B cell (primary cell): ENCODE measurements at regions of chr10 and their contacts with region 1.

Region 1: DNA sequence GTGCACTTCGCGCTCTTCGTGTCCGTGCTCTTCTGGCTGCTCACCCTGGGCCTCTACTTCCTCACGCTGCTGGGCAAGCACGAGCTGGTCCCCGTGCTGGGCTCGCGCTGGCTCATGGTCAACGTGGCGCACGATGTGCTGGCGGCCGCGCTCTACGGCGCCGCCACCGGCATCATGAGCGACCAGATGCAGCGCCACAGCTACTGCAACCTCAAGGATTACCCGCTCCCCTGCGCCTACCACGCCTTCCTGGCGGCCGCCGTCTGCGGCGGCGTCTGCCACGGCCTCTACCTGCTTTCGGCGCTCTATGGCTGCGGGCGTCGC is 480 bp downstream of the MARVELD1 start:
- DNase-seq: peak; percentile 82
- ATAC-seq: peak; percentile 84
- H3K4me3 ChIP-seq: peak overlapping the region; percentile 4 to 67 (median 58)
- H3K4me3 Mint-ChIP-seq: peak overlapping the region; percentile 100
- H3K27ac ChIP-seq: no peak overlapping the region
- H3K27ac Mint-ChIP-seq: peak overlapping the region; percentile 91
- H3K4me1 ChIP-seq: peaks cover 12 to 18% of the 10 kb centered on the region in 2 donors
- H3K4me1 Mint-ChIP-seq: peaks cover 20% of the 10 kb centered on the region
- H3K27me3 ChIP-seq: peaks cover 0 to 37% (median 16%) of the 10 kb centered on the region in 4 experiments
- H3K27me3 Mint-ChIP-seq: peaks cover 27% of the 10 kb centered on the region
- CTCF ChIP-seq: no peak

Region 2: DNA sequence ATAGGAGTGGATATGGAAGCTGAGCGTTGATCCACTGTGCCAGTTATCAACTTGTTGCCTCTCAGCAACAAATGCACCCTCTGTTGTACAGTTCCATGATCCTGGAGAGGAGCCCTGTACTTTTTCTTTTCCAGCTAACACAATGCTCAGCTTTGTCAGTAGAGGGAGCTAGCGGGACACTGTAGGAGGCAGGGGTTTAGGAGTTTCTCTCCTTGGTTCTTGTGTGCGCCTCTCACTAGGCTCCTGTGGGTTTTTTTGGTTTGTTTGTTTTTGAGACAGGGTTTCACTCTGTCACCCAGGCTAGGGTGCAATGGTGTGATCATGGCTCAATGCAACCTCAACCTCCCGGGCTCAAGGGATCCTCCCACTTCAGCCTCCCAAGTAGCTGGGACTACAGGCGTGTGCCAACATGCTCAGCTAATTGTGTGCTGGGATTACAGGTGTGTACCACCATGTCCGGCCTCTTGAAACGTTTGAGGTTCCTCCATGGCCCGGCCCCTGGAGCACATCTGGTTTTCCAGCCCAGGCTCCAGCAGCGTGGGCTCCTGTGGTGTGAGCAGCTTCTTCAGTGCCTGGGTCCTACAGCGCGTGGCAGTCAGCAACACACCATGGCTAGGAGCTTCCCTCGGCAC is 12.5 kb before region 1 on chr10:
- CTCF ChIA-PET with region 1: interaction called, 10 read pairs
- POLR2A ChIA-PET with region 1: no interaction called
- intact Hi-C with region 1: no loop called
- DNase-seq: peak; percentile 66
- ATAC-seq: peak; percentile 75
- H3K4me3 ChIP-seq: no peak overlapping the region
- H3K4me3 Mint-ChIP-seq: no peak overlapping the region
- H3K27ac ChIP-seq: no peak overlapping the region
- H3K27ac Mint-ChIP-seq: no peak overlapping the region
- H3K4me1 ChIP-seq: no peaks in the 10 kb centered on the region
- H3K4me1 Mint-ChIP-seq: no peaks in the 10 kb centered on the region
- H3K27me3 ChIP-seq: peaks cover 0 to 9% (median 2%) of the 10 kb centered on the region in 4 experiments
- H3K27me3 Mint-ChIP-seq: peaks cover 11% of the 10 kb centered on the region
- CTCF ChIP-seq: peak; percentile 78

Region 3: GRCh38 chr10:97724341-97724941 is 10.4 kb after region 1 on chr10:
- CTCF ChIA-PET with region 1: interaction called, 63 read pairs
- POLR2A ChIA-PET with region 1: interaction called, 11 read pairs
- intact Hi-C with region 1: no loop called
- DNase-seq: no peak
- ATAC-seq: no peak
- H3K4me3 ChIP-seq: no peak overlapping the region
- H3K4me3 Mint-ChIP-seq: no peak overlapping the region
- H3K27ac ChIP-seq: no peak overlapping the region
- H3K27ac Mint-ChIP-seq: no peak overlapping the region
- H3K4me1 ChIP-seq: no peaks in the 10 kb centered on the region
- H3K4me1 Mint-ChIP-seq: no peaks in the 10 kb centered on the region
- H3K27me3 ChIP-seq: peaks cover 0 to 4% (median 0%) of the 10 kb centered on the region in 4 experiments
- H3K27me3 Mint-ChIP-seq: peaks cover 12% of the 10 kb centered on the region
- CTCF ChIP-seq: no peak

Region 4: GRCh38 chr10:97731346-97732051 is 17.5 kb after region 1 on chr10:
- CTCF ChIA-PET with region 1: interaction called, 63 read pairs
- POLR2A ChIA-PET with region 1: interaction called, 3 read pairs
- intact Hi-C with region 1: loop called (anchors 1 kb)
- DNase-seq: peak; percentile 76
- ATAC-seq: peak; percentile 70
- H3K4me3 ChIP-seq: no peak overlapping the region
- H3K4me3 Mint-ChIP-seq: no peak overlapping the region
- H3K27ac ChIP-seq: no peak overlapping the region
- H3K27ac Mint-ChIP-seq: peak overlapping the region; percentile 55
- H3K4me1 ChIP-seq: peaks cover 5 to 6% of the 10 kb centered on the region in 2 donors
- H3K4me1 Mint-ChIP-seq: peaks cover 10% of the 10 kb centered on the region
- H3K27me3 ChIP-seq: peaks cover 0 to 3% (median 0%) of the 10 kb centered on the region in 4 experiments
- H3K27me3 Mint-ChIP-seq: peaks cover 4% of the 10 kb centered on the region
- CTCF ChIP-seq: peak; percentile 82

Region 5: DNA sequence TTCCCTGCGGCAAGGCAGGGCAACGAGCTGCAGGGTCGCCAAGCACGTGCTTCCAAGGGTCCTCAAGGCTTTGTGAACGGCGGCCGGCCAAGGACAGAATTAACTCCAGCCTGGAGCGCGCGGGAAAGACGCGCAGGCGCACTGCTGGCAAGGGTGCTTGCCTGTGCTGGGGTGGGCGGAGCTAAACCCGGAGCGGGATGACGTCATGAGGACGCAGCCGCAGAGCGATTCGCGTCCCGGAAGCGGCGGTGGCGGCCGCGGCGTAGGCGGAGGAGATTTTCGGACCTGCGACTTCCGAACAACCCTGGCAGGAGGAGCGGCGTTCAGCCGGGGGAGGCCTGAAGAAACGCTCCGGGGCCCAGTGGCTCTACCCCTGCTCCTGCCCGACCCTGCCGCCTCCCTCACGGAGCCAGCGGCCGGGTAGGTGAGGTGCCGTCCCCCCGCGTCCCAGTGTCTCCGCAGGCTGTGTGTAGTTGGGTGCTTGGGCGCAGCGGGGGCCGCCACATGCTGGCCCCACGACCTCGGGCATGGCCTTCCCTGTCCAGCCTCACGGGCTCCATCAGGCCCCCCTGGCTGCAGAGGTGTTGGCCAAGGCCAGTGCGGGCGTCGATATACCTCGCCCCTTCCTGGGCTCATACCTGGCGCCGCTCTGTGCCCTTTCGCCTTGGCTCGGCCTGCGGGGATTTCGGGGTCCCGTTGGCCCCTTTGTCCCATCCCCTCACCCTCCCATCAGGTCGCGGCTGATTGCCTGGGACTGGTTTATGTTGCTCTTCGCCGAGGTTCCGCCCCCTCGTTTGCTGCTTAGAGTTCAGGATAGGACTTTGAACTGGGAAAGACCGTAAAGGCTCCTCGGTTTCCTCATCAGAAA is 23.1 kb after region 1 on chr10 and contains the start of gene ZFYVE27:
- CTCF ChIA-PET with region 1: interaction called, 63 read pairs
- POLR2A ChIA-PET with region 1: interaction called, 3 read pairs
- intact Hi-C with region 1: no loop called
- DNase-seq: peak; percentile 98
- ATAC-seq: peak; percentile 92
- H3K4me3 ChIP-seq: peak within 1 kb of the TSS; percentile 46 to 97 (median 77)
- H3K4me3 Mint-ChIP-seq: peak within 1 kb of the TSS; percentile 100
- H3K27ac ChIP-seq: peak within 1 kb of the TSS; percentile 92 to 97
- H3K27ac Mint-ChIP-seq: peak within 1 kb of the TSS; percentile 100
- H3K4me1 ChIP-seq: peaks cover 25 to 39% of the 10 kb centered on the region in 2 donors
- H3K4me1 Mint-ChIP-seq: peaks cover 55% of the 10 kb centered on the region
- H3K27me3 ChIP-seq: no peaks in the 10 kb centered on the region
- H3K27me3 Mint-ChIP-seq: no peaks in the 10 kb centered on the region
- CTCF ChIP-seq: no peak
- total RNA-seq, gene ZFYVE27: 79.0 and 79.7 TPM in 2 replicates